ENCODE measurements at regions of chr7 and their contacts with region 1.

Region 1: GRCh38 chr7:118195837-118196474 is 12.0 kb downstream of the LSM8 start:
- DNase-seq: peak; percentile 48 to 56 (median 52)
- H3K4me3 ChIP-seq: no peak overlapping the region
- H3K4me3 Mint-ChIP-seq: no peak overlapping the region
- H3K27ac ChIP-seq: no peak overlapping the region
- H3K27ac Mint-ChIP-seq: peak overlapping the region in 3 of 7 donors; percentile 6 to 47 (median 45)
- H3K4me1 ChIP-seq: no peaks in the 10 kb centered on the region
- H3K4me1 Mint-ChIP-seq: peaks cover 4 to 9% (median 6%) of the 10 kb centered on the region in 4 donors
- H3K27me3 ChIP-seq: no peaks in the 10 kb centered on the region
- H3K27me3 Mint-ChIP-seq: no peaks in the 10 kb centered on the region

Region 2: DNA sequence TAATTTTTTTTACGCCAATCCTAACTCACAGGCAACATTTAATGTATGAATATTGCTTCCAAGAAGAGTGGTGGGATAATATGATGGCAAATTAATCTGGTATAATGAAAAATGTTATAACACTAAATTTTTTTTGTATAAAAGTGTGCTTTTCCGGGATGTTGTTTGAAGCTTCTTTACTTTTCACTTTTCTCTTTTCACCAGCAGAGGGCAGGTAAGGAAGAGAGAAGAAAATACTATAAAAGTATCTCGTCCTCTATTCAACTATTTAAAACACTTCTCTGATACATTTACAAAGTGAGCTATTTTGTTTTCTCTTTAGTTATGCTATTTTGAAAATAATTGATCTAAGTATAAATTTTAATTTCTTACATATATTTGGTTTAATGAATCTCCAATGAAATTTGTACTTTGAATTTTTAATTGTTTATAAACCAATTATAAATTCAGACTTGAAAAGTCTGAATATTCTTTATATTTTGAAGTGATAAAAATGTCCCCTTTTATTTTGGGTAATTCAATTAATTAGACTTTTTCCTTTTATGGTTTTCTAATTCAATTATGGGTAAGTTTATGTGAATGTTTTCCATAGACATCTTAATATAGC is 736.9 kb before region 1 on chr7:
- CTCF ChIA-PET with region 1: no interaction called
- POLR2A ChIA-PET with region 1: no interaction called
- intact Hi-C with region 1: loop called (anchors 5 kb)
- DNase-seq: no peak
- H3K4me3 ChIP-seq: no peak overlapping the region
- H3K4me3 Mint-ChIP-seq: no peak overlapping the region
- H3K27ac ChIP-seq: no peak overlapping the region
- H3K27ac Mint-ChIP-seq: no peak overlapping the region
- H3K4me1 ChIP-seq: no peaks in the 10 kb centered on the region
- H3K4me1 Mint-ChIP-seq: no peaks in the 10 kb centered on the region
- H3K27me3 ChIP-seq: no peaks in the 10 kb centered on the region
- H3K27me3 Mint-ChIP-seq: no peaks in the 10 kb centered on the region

Region 3: GRCh38 chr7:117750612-117751563 is 445.1 kb before region 1 on chr7:
- CTCF ChIA-PET with region 1: no interaction called
- POLR2A ChIA-PET with region 1: no interaction called
- intact Hi-C with region 1: loop called (anchors 10 kb)
- DNase-seq: no peak
- H3K4me3 ChIP-seq: no peak overlapping the region
- H3K4me3 Mint-ChIP-seq: no peak overlapping the region
- H3K27ac ChIP-seq: no peak overlapping the region
- H3K27ac Mint-ChIP-seq: no peak overlapping the region
- H3K4me1 ChIP-seq: no peaks in the 10 kb centered on the region
- H3K4me1 Mint-ChIP-seq: no peaks in the 10 kb centered on the region
- H3K27me3 ChIP-seq: no peaks in the 10 kb centered on the region
- H3K27me3 Mint-ChIP-seq: peaks cover 0 to 2% of the 10 kb centered on the region in 2 donors

Region 4: GRCh38 chr7:118153551-118154177 is 42.3 kb before region 1 on chr7:
- CTCF ChIA-PET with region 1: interaction called, 8 read pairs
- POLR2A ChIA-PET with region 1: no interaction called
- intact Hi-C with region 1: loop called (anchors 2 kb)
- DNase-seq: peak; percentile 18 to 40 (median 34)
- H3K4me3 ChIP-seq: no peak overlapping the region
- H3K4me3 Mint-ChIP-seq: no peak overlapping the region
- H3K27ac ChIP-seq: no peak overlapping the region
- H3K27ac Mint-ChIP-seq: no peak overlapping the region
- H3K4me1 ChIP-seq: no peaks in the 10 kb centered on the region
- H3K4me1 Mint-ChIP-seq: no peaks in the 10 kb centered on the region
- H3K27me3 ChIP-seq: no peaks in the 10 kb centered on the region
- H3K27me3 Mint-ChIP-seq: peaks cover 20% of the 10 kb centered on the region in 2 donors

Region 5: GRCh38 chr7:118175740-118176139 is 20.2 kb before region 1 on chr7:
- CTCF ChIA-PET with region 1: interaction called, 5 read pairs
- POLR2A ChIA-PET with region 1: no interaction called
- intact Hi-C with region 1: loop called (anchors 2 kb)
- DNase-seq: no peak
- H3K4me3 ChIP-seq: no peak overlapping the region
- H3K4me3 Mint-ChIP-seq: no peak overlapping the region
- H3K27ac ChIP-seq: no peak overlapping the region
- H3K27ac Mint-ChIP-seq: no peak overlapping the region
- H3K4me1 ChIP-seq: no peaks in the 10 kb centered on the region
- H3K4me1 Mint-ChIP-seq: no peaks in the 10 kb centered on the region
- H3K27me3 ChIP-seq: no peaks in the 10 kb centered on the region
- H3K27me3 Mint-ChIP-seq: peaks cover 10 to 15% of the 10 kb centered on the region in 2 donors

Region 6: GRCh38 chr7:118183786-118184564 is 12.0 kb before region 1 on chr7 and contains the start of gene LSM8:
- CTCF ChIA-PET with region 1: interaction called, 7 read pairs
- POLR2A ChIA-PET with region 1: interaction called, 3 read pairs
- intact Hi-C with region 1: loop called (anchors 1 kb)
- DNase-seq: peak; percentile 96 to 98 (median 97)
- H3K4me3 ChIP-seq: peak within 1 kb of the TSS; percentile 63 to 96
- H3K4me3 Mint-ChIP-seq: peak within 1 kb of the TSS; percentile 92 to 100 (median 98)
- H3K27ac ChIP-seq: peak within 1 kb of the TSS; percentile 95
- H3K27ac Mint-ChIP-seq: peak within 1 kb of the TSS; percentile 92 to 100 (median 100)
- H3K4me1 ChIP-seq: peaks cover 41% of the 10 kb centered on the region
- H3K4me1 Mint-ChIP-seq: peaks cover 29 to 55% (median 38%) of the 10 kb centered on the region in 4 donors
- H3K27me3 ChIP-seq: no peaks in the 10 kb centered on the region
- H3K27me3 Mint-ChIP-seq: no peaks in the 10 kb centered on the region
- total RNA-seq, gene LSM8: 59.0 to 64.1 TPM